Stomach (tissue), 19 donors: ENCODE measurements at regions of chr18 and their contacts with region 1.

Region 1: DNA sequence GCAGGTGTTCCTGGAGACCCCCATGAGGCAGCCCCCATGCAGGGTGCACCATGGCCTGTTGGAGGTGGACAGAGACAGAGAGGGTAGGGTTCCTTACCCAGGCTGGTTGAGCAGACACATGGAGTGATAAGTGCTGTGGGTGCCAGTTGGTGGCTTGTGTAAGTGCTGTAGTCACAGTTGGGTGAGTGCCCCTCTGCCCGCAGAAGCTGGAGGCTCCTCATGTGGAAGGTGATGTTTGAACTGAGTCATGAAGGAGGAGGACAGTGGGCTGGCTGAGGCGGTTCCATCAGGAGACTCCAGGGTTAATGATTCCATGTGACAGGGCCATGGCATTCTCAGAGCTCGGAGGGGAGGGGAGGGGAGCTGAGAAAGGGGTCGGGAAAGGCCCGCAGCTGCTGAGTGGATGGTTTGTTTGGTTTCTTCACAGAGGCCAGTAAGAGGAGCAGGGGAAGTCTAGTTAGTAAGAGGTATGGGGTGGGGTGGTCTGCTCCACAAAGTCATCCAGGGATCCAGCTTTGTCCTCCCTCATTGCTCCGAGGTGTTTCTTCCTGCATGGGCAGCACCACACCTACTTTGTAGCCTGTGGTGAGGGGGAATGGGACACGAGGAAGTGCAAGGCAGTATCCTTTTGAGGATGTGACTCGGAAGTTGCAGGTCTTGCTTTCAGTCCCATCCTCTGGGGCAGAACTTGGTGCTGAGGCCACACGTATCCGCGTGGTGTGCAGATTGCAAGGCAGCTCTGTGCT is 13.6 kb downstream of the IMPA2 start:
- DNase-seq: peak; percentile 54 to 66
- H3K4me3 ChIP-seq: no peak overlapping the region
- H3K27ac ChIP-seq: peak overlapping the region; percentile 74 to 88 (median 83)
- H3K4me1 ChIP-seq: peaks cover 36 to 77% (median 71%) of the 10 kb centered on the region in 4 donors
- H3K27me3 ChIP-seq: no peaks in the 10 kb centered on the region
- CTCF ChIP-seq: no peak
- EP300 ChIP-seq: no peak
- POLR2A ChIP-seq: no peak

Region 2: GRCh38 chr18:11710578-11710977 is 284.3 kb before region 1 on chr18:
- intact Hi-C with region 1: no loop called
- DNase-seq: no peak
- H3K4me3 ChIP-seq: no peak overlapping the region
- H3K27ac ChIP-seq: no peak overlapping the region
- H3K4me1 ChIP-seq: no peaks in the 10 kb centered on the region
- H3K27me3 ChIP-seq: peaks cover 0 to 3% (median 0%) of the 10 kb centered on the region in 3 donors
- CTCF ChIP-seq: no peak
- EP300 ChIP-seq: no peak
- POLR2A ChIP-seq: no peak

Region 3: GRCh38 chr18:11937874-11938478 is 56.9 kb before region 1 on chr18:
- intact Hi-C with region 1: loop called (anchors 5 kb)
- DNase-seq: peak; percentile 87 to 90
- H3K4me3 ChIP-seq: no peak overlapping the region
- H3K27ac ChIP-seq: no peak overlapping the region
- H3K4me1 ChIP-seq: no peaks in the 10 kb centered on the region
- H3K27me3 ChIP-seq: no peaks in the 10 kb centered on the region
- CTCF ChIP-seq: peak in 5 of 7 experiments; percentile 44 to 88 (median 76)
- EP300 ChIP-seq: no peak
- POLR2A ChIP-seq: no peak

Region 4: DNA sequence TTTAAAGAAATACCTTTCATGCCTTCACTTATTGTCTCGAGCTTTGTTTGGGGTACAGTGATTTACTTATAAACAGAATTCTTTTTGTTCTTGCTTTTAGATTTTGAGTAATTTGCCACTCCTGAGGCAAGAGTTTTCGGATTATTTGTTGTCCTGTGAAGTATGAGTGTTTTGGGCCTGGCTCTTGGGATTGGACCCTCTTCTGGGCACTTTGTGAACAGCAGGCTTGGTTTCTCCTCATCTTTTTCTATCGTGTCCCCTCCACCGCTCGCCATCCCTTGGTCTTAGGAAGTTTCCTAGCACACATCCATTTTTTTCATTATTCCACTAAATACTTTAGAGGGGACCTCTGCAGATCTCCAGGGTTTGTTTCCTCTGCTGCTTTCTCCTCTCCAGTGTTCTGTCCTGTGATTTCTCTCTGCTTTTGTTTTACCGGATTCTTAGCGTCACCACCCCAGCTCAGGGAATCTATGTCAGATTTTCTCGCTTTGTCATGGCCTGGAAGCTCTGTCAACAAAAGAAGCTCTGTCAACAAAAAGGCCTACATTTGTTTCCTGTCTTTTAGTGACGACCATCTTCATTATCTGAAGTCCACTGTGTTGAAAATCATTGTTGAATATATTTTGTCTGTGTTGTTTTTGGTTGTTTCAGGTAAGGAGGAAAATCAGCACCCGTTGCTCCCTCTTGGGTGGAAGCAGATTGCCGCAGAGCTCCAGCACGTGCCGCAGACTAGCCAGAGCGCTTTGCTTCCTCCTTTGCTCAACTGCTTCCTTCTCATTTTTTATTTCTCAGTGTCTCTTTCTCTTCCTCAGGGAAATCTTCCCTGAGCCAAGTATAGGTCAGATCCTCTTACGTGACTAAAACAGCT is 126.5 kb after region 1 on chr18:
- intact Hi-C with region 1: no loop called
- DNase-seq: no peak
- H3K4me3 ChIP-seq: no peak overlapping the region
- H3K27ac ChIP-seq: no peak overlapping the region
- H3K4me1 ChIP-seq: no peaks in the 10 kb centered on the region
- H3K27me3 ChIP-seq: peaks cover 0 to 7% (median 0%) of the 10 kb centered on the region in 3 donors
- CTCF ChIP-seq: no peak
- EP300 ChIP-seq: no peak
- POLR2A ChIP-seq: no peak